ENCODE measurements at regions of chr6 and their contacts with region 1.

Region 1: DNA sequence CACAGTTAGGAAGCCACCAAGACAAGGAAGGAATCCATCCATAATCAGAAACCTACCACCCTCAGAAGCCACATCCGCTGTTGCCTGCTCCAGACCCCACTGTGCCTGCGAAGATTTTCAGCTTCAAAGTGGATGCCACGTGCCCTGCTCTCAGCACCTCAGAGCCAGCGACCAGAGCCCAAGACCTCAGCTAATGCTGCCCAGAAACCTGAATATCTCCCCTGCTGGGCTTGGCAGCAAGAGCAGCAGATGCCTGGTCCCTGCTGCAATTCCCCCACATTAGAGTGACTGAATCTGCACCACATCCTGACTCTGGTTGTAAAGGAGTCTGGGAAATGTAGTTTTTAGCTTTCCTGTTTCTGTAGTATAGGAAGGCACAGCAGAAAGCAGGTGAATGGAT is 10.7 kb upstream of the ULBP3 start:
- DNase-seq: no peak
- ATAC-seq: no peak
- H3K4me3 ChIP-seq: no peak overlapping the region
- H3K27ac ChIP-seq: no peak overlapping the region
- H3K4me1 ChIP-seq: no peaks in the 10 kb centered on the region
- H3K27me3 ChIP-seq: no peaks in the 10 kb centered on the region
- CTCF ChIP-seq: no peak

Region 2: DNA sequence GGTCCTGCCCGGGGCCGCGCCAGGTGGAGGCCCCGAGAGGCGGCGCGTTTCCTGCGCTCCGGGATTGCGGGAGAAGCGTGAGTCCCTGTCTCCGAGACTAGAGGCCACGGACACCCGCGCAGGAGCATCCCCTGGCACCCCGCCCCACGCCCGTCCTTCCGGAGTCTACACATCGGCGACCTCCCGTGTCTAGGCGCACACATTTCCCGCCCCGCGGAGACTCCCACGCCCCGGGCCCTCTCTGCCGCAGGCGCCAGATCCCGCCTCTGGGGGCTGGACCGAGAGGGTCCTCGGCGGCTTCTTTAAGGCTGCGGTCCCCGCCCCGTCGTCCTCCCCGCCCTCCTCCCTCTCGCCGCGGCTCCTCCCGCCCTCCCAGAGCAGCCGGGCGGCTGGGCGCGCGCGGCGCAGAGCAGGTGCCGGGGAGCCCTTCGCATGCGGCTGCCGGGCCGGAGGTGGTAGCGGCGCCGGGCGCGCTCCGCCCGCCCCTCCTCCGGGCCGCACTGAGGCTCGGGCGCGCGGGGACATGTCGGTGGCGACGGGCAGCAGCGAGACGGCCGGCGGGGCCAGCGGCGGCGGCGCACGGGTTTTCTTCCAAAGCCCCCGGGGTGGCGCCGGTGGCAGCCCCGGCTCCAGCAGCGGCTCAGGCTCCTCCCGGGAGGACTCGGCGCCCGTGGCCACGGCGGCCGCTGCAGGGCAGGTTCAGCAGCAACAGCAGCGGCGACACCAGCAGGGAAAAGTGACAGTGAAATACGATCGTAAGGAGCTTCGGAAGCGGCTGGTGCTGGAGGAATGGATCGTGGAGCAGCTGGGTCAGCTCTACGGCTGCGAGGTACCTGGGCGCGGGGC is 63.3 kb after region 1 on chr6 and contains the start of gene PPP1R14C:
- intact Hi-C with region 1: loop called in 1 of 2 experiments (anchors 5 kb)
- DNase-seq: peak; percentile 43 to 75
- ATAC-seq: peak; percentile 79 to 84 (median 80)
- H3K4me3 ChIP-seq: peak within 1 kb of the TSS; percentile 81
- H3K27ac ChIP-seq: peak within 1 kb of the TSS; percentile 88
- H3K4me1 ChIP-seq: peaks cover 11% of the 10 kb centered on the region
- H3K27me3 ChIP-seq: peaks cover 0 to 5% (median 0%) of the 10 kb centered on the region in 3 donors
- CTCF ChIP-seq: no peak
- total RNA-seq, gene PPP1R14C: 13.3 to 62.8 (median 22.4) TPM

Region 3: GRCh38 chr6:150334790-150335783 is 255.5 kb after region 1 on chr6:
- intact Hi-C with region 1: loop called (anchors 1 to 2 kb)
- DNase-seq: no peak
- ATAC-seq: peak in 2 of 4 donors; percentile 53 to 78
- H3K4me3 ChIP-seq: no peak overlapping the region
- H3K27ac ChIP-seq: no peak overlapping the region
- H3K4me1 ChIP-seq: no peaks in the 10 kb centered on the region
- H3K27me3 ChIP-seq: no peaks in the 10 kb centered on the region
- CTCF ChIP-seq: peak; percentile 95

Region 4: DNA sequence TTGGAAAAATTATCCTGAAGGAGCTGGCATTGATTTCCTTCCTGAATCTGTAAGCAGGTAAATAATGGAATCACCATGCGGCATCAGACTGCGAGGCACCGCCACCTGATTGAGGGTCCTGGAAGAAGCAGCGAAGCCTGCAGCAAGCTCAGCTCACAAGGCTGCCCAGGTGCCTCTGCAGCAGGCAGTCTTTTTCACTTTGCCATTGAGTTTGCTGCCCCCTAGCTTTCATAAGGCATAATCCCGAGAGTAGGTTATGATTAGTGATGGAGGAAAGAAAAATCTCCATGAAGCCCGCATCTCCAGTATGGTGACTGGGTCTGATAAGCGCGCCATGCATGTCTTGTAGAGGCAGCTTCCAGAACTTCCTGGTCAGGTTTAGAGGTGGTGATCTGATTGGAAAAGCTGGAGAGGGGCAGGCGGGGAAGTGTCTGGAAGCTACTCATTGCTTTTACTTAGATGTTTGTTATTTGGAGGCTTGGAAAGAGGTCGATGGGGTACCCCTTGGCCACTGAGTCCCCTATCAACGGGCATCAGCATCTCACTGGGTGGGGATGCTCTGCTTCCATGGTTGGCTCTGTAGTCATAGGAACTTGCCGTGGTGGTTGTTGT is 315.9 kb after region 1 on chr6:
- intact Hi-C with region 1: loop called (anchors 2 to 5 kb)
- DNase-seq: no peak
- ATAC-seq: peak; percentile 67 to 85 (median 84)
- H3K4me3 ChIP-seq: no peak overlapping the region
- H3K27ac ChIP-seq: no peak overlapping the region
- H3K4me1 ChIP-seq: no peaks in the 10 kb centered on the region
- H3K27me3 ChIP-seq: no peaks in the 10 kb centered on the region
- CTCF ChIP-seq: peak; percentile 73